Endothelial cell of umbilical vein (primary cell): ENCODE measurements at regions of chr7 and their contacts with region 1.

Region 1: DNA sequence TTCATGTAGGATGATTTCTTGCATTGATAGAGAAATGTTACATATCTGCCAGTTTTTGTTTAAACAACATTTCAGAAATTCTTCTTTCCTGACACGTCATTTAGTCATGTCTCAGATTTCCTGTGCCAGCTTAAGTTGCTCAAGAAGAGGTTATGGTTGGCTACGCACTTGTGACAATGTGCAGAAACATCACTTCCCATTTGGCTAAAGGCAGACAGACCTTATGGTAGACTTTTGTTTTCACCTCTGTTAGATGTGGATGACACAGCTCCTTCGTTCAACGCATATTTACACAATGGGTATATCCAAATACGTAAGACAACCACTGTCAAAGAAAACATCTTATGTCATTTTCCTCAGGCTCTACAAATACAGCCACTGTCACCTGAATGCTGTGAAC is 125.8 kb downstream of the DOCK4 start:
- DNase-seq: peak; percentile 85
- H3K4me3 ChIP-seq: peak overlapping the region in 1 of 3 experiments; percentile 36
- H3K27ac ChIP-seq: peak overlapping the region; percentile 95
- H3K4me1 ChIP-seq: peaks cover 46% of the 10 kb centered on the region
- H3K27me3 ChIP-seq: no peaks in the 10 kb centered on the region
- CTCF ChIP-seq: no peak
- POLR2A ChIP-seq: no peak

Region 2: GRCh38 chr7:112022128-112022527 is 58.3 kb before region 1 on chr7:
- CTCF ChIA-PET with region 1: interaction called, 4 read pairs
- POLR2A ChIA-PET with region 1: no interaction called
- dilution Hi-C with region 1: no loop called
- intact Hi-C with region 1: loop called (anchors 1 kb)
- DNase-seq: no peak
- H3K4me3 ChIP-seq: no peak overlapping the region
- H3K27ac ChIP-seq: peak overlapping the region; percentile 97
- H3K4me1 ChIP-seq: peaks cover 43% of the 10 kb centered on the region
- H3K27me3 ChIP-seq: no peaks in the 10 kb centered on the region
- CTCF ChIP-seq: no peak
- POLR2A ChIP-seq: no peak

Region 3: GRCh38 chr7:112132051-112132694 is 51.7 kb after region 1 on chr7:
- CTCF ChIA-PET with region 1: interaction called, 3 read pairs
- POLR2A ChIA-PET with region 1: no interaction called
- dilution Hi-C with region 1: no loop called
- intact Hi-C with region 1: loop called (anchors 1 kb)
- DNase-seq: peak; percentile 95
- H3K4me3 ChIP-seq: no peak overlapping the region
- H3K27ac ChIP-seq: peak overlapping the region; percentile 91
- H3K4me1 ChIP-seq: peaks cover 43% of the 10 kb centered on the region
- H3K27me3 ChIP-seq: no peaks in the 10 kb centered on the region
- CTCF ChIP-seq: no peak
- POLR2A ChIP-seq: no peak

Region 4: DNA sequence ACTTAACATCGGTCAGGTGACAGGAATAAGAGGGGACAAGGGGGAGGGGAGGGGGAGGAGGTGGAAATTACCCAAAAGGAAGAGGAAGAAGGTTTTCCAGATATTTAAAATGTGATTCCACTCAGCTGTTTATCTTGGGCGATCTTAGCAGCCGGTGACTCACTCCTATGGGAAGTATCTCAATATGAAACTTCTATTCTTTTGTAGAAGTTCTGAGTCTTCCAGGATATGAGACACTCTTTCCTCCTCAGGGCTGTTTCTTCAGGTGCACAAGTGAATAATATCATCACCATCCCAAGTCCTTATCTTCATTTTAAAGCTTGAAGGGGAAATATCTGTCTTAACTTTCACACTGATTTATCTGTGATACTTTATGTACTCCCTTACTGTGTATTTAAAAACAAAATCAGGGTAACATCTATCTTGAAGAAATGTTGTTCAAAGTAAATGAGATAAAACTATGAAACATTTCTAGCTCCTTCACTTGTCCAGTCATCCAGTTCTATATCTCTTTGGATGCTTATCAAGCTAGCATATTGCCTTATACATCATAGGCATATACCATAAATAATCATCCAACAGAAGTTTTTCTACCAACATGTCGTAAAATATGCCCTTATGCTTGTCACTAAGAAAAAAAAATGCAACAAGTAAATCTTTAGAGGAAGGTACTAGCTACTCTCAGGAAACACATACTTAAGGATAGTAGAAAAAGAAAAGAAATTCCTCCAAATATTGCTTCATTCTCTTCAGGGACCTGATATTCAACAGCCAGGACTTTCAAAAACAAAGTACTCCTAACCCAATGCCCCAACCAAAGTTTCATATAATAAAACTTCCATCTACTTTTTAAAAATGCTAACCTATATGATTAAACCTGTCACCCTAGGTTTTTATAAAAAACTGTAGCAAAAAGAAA is 112.1 kb after region 1 on chr7:
- CTCF ChIA-PET with region 1: no interaction called
- POLR2A ChIA-PET with region 1: no interaction called
- dilution Hi-C with region 1: no loop called
- intact Hi-C with region 1: loop called (anchors 1 kb)
- DNase-seq: peak; percentile 98
- H3K4me3 ChIP-seq: no peak overlapping the region
- H3K27ac ChIP-seq: peak overlapping the region; percentile 90
- H3K4me1 ChIP-seq: peaks cover 71% of the 10 kb centered on the region
- H3K27me3 ChIP-seq: no peaks in the 10 kb centered on the region
- CTCF ChIP-seq: no peak
- POLR2A ChIP-seq: peak; percentile 81

Region 5: GRCh38 chr7:112470194-112470593 is 389.8 kb after region 1 on chr7:
- CTCF ChIA-PET with region 1: no interaction called
- POLR2A ChIA-PET with region 1: no interaction called
- dilution Hi-C with region 1: no loop called
- intact Hi-C with region 1: no loop called
- DNase-seq: no peak
- H3K4me3 ChIP-seq: no peak overlapping the region
- H3K27ac ChIP-seq: no peak overlapping the region
- H3K4me1 ChIP-seq: no peaks in the 10 kb centered on the region
- H3K27me3 ChIP-seq: no peaks in the 10 kb centered on the region
- CTCF ChIP-seq: no peak
- POLR2A ChIP-seq: no peak